Dendritic cell treated with granulocyte-macrophage colony-stimulating factor and Interleukin-4, amounts not matched to agents 40 ng/mL and 50 ng/mL, for 4 days (primary cell): ENCODE measurements at regions of chr4 and their contacts with region 1.

Region 1: GRCh38 chr4:174714393-174715211 is 114.4 kb downstream of the GLRA3 start:
- H3K4me3 Mint-ChIP-seq: no peak overlapping the region
- H3K27ac Mint-ChIP-seq: no peak overlapping the region
- H3K4me1 Mint-ChIP-seq: no peaks in the 10 kb centered on the region
- H3K27me3 Mint-ChIP-seq: peaks cover 1% of the 10 kb centered on the region

Region 2: GRCh38 chr4:174631901-174632758 is 82.5 kb before region 1 on chr4:
- intact Hi-C with region 1: loop called (anchors 5 kb)
- H3K4me3 Mint-ChIP-seq: no peak overlapping the region
- H3K27ac Mint-ChIP-seq: no peak overlapping the region
- H3K4me1 Mint-ChIP-seq: no peaks in the 10 kb centered on the region
- H3K27me3 Mint-ChIP-seq: no peaks in the 10 kb centered on the region

Region 3: DNA sequence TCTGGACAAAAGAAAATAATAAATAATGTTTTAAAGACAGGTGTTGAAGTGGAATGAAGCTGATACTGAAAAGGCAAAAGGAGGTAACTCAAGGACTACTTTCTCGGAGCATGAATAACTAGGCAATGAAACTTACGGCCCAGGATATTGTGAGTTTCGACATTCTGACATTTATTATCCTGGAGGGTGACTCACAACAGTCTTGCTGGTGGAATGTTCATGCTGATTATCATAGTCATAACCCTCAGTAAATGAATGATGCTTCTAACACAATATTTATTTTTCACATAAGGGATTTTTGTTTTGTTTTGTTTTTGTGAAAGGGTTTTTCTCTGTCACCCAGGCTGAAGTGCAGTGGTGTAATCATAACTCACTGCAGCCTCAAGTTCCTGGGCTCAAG is 45.3 kb before region 1 on chr4:
- intact Hi-C with region 1: no loop called
- H3K4me3 Mint-ChIP-seq: no peak overlapping the region
- H3K27ac Mint-ChIP-seq: no peak overlapping the region
- H3K4me1 Mint-ChIP-seq: no peaks in the 10 kb centered on the region
- H3K27me3 Mint-ChIP-seq: no peaks in the 10 kb centered on the region

Region 4: DNA sequence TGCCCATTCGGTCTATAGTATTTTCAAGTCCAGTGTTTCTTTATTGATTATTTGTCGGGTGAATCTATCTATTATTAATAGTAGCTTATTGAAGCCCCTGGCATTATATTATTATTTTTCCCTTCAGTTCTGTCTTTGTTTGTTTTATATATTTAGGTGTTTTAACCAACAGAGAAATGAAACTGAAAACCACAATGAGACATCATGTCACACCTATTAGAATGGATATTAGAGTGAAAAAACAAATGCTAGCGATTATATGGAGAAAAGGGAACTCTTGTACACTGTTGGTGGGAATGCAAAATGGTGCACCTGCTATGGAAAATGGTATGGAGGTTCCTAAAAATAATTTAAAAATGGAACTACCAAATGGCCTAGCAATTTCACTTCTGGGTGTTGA is 476.1 kb after region 1 on chr4:
- intact Hi-C with region 1: no loop called
- H3K4me3 Mint-ChIP-seq: no peak overlapping the region
- H3K27ac Mint-ChIP-seq: no peak overlapping the region
- H3K4me1 Mint-ChIP-seq: no peaks in the 10 kb centered on the region
- H3K27me3 Mint-ChIP-seq: no peaks in the 10 kb centered on the region